Right cardiac atrium (tissue), 5 donors: ENCODE measurements at regions of chr17 and their contacts with region 1.

Region 1: GRCh38 chr17:39722965-39723848 is 7.1 kb downstream of the MIEN1 start:
- DNase-seq: peak in 2 of 3 donors; percentile 58 to 60
- ATAC-seq: peak; percentile 7 to 24
- H3K4me3 ChIP-seq: no peak overlapping the region
- H3K27ac ChIP-seq: no peak overlapping the region
- H3K4me1 ChIP-seq: no peaks in the 10 kb centered on the region
- H3K27me3 ChIP-seq: no peaks in the 10 kb centered on the region

Region 2: GRCh38 chr17:39617446-39618245 is 105.6 kb before region 1 on chr17:
- intact Hi-C with region 1: no loop called
- DNase-seq: peak; percentile 61 to 89 (median 85)
- ATAC-seq: peak; percentile 34 to 49
- H3K4me3 ChIP-seq: peak overlapping the region; percentile 91
- H3K27ac ChIP-seq: no peak overlapping the region
- H3K4me1 ChIP-seq: no peaks in the 10 kb centered on the region
- H3K27me3 ChIP-seq: no peaks in the 10 kb centered on the region

Region 3: GRCh38 chr17:39668199-39668966 is 54.8 kb before region 1 on chr17 and contains the start of gene PNMT:
- intact Hi-C with region 1: loop called in 1 of 4 experiments (anchors 10 kb)
- DNase-seq: peak; percentile 75 to 93 (median 91)
- ATAC-seq: peak in 1 of 2 donors; percentile 3
- H3K4me3 ChIP-seq: peak within 1 kb of the TSS; percentile 25
- H3K27ac ChIP-seq: peak within 1 kb of the TSS; percentile 73
- H3K4me1 ChIP-seq: no peaks in the 10 kb centered on the region
- H3K27me3 ChIP-seq: no peaks in the 10 kb centered on the region
- total RNA-seq, gene PNMT: 18.1 to 39.6 (median 21.3) TPM